SK-N-SH (cell line): ENCODE measurements at regions of chr7 and their contacts with region 1.

Region 1: GRCh38 chr7:132318352-132319318 is 257.6 kb downstream of the PLXNA4 start:
- DNase-seq: peak; percentile 87
- H3K4me3 ChIP-seq: peak overlapping the region in 1 of 2 experiments; percentile 7; a peak in 1 of 4 replicates
- H3K27ac ChIP-seq: no peak overlapping the region
- H3K4me1 ChIP-seq: peaks cover 0 to 39% of the 10 kb centered on the region in 2 experiments; a peak in 2 of 4 replicates
- H3K27me3 ChIP-seq: no peaks in the 10 kb centered on the region; the same call in 1 of the 2 replicates
- CTCF ChIP-seq: peak; percentile 99
- EP300 ChIP-seq: 0 out of 4 replicates have a peak, but pooled peaks of 1 of the 2 experiments have one; percentile 23
- RAD21 ChIP-seq: peak; percentile 100

Region 2: DNA sequence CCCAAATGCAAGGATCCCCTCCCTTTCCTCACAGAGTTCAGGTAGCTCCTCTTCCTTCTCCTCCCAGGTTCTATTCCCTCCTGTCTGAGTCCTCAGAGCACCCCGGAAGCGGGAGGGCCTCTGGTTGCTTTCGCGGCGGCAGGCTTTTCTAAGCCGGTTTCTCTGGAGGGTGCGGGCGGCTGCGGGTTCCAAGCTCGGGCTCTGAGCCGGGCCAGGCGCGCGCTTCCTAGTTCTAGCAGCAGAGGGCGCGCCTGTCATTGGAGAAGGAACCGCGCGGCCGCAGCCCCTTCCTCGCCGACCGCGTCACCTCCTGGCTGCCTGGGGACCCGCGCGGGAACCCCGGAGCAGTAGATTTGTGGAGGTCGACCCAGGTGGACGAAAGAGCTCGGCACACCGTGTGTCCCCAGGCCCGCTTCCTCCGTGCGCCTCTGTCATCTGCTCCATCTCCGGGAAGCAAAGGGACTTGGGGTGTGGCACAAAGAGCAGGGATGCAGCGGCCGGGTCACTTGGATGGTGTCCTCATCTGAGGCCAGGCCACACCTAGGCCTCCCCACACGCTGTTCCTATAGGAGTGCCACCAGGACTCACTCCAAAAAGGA is 373.2 kb before region 1 on chr7:
- CTCF ChIA-PET with region 1: interaction called, 47 read pairs
- POLR2A ChIA-PET with region 1: no interaction called
- DNase-seq: peak; percentile 93
- H3K4me3 ChIP-seq: peak overlapping the region; percentile 23 to 37
- H3K27ac ChIP-seq: peak overlapping the region in 1 of 2 experiments; percentile 31; a peak in 1 of 4 replicates
- H3K4me1 ChIP-seq: peaks cover 13 to 31% of the 10 kb centered on the region in 2 experiments; a peak in 3 of 4 replicates
- H3K27me3 ChIP-seq: no peaks in the 10 kb centered on the region
- CTCF ChIP-seq: peak; percentile 97
- EP300 ChIP-seq: no peak; a peak in 1 of 4 replicates
- RAD21 ChIP-seq: peak; percentile 95

Region 3: GRCh38 chr7:132300599-132301277 is 17.9 kb before region 1 on chr7:
- CTCF ChIA-PET with region 1: interaction called, 56 read pairs
- POLR2A ChIA-PET with region 1: no interaction called
- DNase-seq: no peak
- H3K4me3 ChIP-seq: no peak overlapping the region
- H3K27ac ChIP-seq: no peak overlapping the region
- H3K4me1 ChIP-seq: peaks cover 0 to 10% of the 10 kb centered on the region in 2 experiments; a peak in 1 of 4 replicates
- H3K27me3 ChIP-seq: no peaks in the 10 kb centered on the region
- CTCF ChIP-seq: no peak
- EP300 ChIP-seq: no peak
- RAD21 ChIP-seq: no peak

Region 4: DNA sequence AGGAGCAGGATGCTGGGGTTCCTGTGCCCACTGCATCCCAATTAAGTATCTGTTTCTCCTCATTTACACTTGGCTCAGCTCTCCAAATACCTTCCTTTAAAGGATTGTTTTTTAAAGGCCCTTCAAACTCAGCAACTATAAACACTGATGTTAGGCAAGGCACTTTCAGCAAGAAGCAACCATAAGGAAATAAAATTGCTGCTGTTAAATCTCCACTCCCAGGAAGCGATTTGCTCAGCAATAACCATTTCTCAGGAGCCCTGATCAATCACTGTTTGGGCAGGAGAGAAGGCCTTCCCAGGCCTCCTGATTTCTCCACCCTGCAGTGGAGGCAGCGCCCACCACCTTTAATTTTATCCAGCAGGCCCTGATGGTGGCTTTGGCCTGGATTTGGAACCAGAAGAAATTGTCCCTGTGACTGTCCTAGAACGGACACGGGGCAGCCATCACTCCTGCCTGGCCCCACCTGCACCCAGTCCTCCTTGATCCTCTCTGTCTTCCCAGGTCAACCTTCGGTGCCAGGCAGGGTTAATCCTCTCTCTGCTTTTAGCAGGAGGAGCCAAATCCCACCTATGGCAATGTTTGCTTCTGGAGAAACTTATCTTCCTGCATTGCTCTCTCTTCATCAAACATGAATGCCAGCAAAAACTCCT is 57.9 kb after region 1 on chr7:
- CTCF ChIA-PET with region 1: interaction called, 24 read pairs
- POLR2A ChIA-PET with region 1: no interaction called
- DNase-seq: no peak
- H3K4me3 ChIP-seq: no peak overlapping the region
- H3K27ac ChIP-seq: peak overlapping the region in 1 of 2 experiments; percentile 67; a peak in 1 of 4 replicates
- H3K4me1 ChIP-seq: peaks cover 0 to 34% of the 10 kb centered on the region in 2 experiments; a peak in 2 of 4 replicates
- H3K27me3 ChIP-seq: no peaks in the 10 kb centered on the region
- CTCF ChIP-seq: no peak
- EP300 ChIP-seq: no peak
- RAD21 ChIP-seq: no peak

Region 5: DNA sequence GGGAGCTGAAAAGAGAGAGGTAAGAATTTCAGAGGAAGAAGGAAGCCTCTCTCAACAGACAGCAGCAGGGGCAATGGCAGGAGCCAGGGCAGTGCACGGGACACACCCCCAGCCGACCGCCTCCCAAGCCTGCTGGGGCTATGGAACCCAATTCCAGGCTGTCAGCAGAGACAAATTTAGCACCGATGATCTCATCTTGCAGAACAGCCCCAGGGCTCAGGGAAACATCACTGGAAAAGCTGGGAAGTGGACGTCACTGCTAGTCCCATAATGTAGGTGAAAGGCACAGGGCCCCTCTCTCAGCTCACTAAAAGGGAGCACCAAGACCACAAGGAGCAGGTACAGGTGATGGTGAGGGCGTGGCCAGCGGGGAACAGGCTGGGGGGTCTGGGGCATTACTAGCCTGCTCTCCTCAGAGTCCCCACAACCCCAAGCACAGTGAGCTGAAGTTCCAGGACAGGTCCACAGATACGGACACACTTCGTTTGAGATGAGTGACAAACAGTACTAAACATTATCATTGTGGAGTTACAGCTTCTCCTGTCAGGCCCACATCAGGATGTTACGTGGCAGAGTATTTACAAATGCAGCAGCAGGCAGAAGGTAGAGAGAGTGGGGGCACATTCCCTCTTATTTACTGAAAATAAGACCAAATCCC is 154.0 kb after region 1 on chr7:
- CTCF ChIA-PET with region 1: interaction called, 26 read pairs
- POLR2A ChIA-PET with region 1: no interaction called
- DNase-seq: peak; percentile 77
- H3K4me3 ChIP-seq: no peak overlapping the region
- H3K27ac ChIP-seq: peak overlapping the region in 1 of 2 experiments; percentile 63; a peak in 3 of 4 replicates
- H3K4me1 ChIP-seq: peaks cover 14 to 60% of the 10 kb centered on the region in 2 experiments; a peak in 3 of 4 replicates
- H3K27me3 ChIP-seq: peaks cover 3% of the 10 kb centered on the region; the same call in 1 of the 2 replicates
- CTCF ChIP-seq: no peak
- EP300 ChIP-seq: peak in 1 of 2 experiments; percentile 84; a peak in 2 of 4 replicates
- RAD21 ChIP-seq: peak; percentile 29; the same call in 1 of the 2 replicates

Region 6: DNA sequence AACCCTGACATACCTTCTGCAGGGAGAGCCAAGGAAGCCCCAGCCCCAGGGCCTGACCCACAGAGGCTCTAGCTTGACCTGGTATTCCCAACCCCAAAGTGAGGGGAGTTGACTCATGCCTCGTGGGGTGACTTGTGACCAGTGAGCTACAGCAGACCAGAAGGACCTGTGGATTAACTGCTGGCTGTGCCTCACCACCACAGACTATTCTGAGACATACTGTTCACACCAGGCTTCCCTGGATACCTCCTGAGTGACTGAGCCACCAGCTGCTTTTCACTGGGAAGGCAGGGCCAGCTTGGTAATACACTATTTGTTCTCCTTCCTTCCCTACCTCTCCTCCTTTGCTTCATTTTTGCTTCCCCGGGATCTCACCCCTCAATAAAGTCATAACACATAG is 250.3 kb after region 1 on chr7:
- CTCF ChIA-PET with region 1: interaction called, 440 read pairs
- POLR2A ChIA-PET with region 1: no interaction called
- DNase-seq: no peak
- H3K4me3 ChIP-seq: no peak overlapping the region
- H3K27ac ChIP-seq: no peak overlapping the region
- H3K4me1 ChIP-seq: peaks cover 0 to 10% of the 10 kb centered on the region in 2 experiments; a peak in 1 of 4 replicates
- H3K27me3 ChIP-seq: no peaks in the 10 kb centered on the region; the same call in 1 of the 2 replicates
- CTCF ChIP-seq: no peak
- EP300 ChIP-seq: no peak
- RAD21 ChIP-seq: no peak